CD8-positive, alpha-beta T cell (primary cell): ENCODE measurements at regions of chr7 and their contacts with region 1.

Region 1: GRCh38 chr7:55365675-55366460 is 731 bp downstream of the LANCL2 start:
- DNase-seq: peak; percentile 87 to 98 (median 93)
- ATAC-seq: peak; percentile 86
- H3K4me3 ChIP-seq: peak overlapping the region; percentile 92 to 96
- H3K4me3 Mint-ChIP-seq: peak overlapping the region; percentile 96
- H3K27ac ChIP-seq: peak overlapping the region; percentile 96 to 97
- H3K27ac Mint-ChIP-seq: peak overlapping the region; percentile 99
- H3K4me1 ChIP-seq: peaks cover 27% of the 10 kb centered on the region
- H3K4me1 Mint-ChIP-seq: peaks cover 35% of the 10 kb centered on the region
- H3K27me3 ChIP-seq: no peaks in the 10 kb centered on the region
- H3K27me3 Mint-ChIP-seq: no peaks in the 10 kb centered on the region
- CTCF ChIP-seq: no peak

Region 2: DNA sequence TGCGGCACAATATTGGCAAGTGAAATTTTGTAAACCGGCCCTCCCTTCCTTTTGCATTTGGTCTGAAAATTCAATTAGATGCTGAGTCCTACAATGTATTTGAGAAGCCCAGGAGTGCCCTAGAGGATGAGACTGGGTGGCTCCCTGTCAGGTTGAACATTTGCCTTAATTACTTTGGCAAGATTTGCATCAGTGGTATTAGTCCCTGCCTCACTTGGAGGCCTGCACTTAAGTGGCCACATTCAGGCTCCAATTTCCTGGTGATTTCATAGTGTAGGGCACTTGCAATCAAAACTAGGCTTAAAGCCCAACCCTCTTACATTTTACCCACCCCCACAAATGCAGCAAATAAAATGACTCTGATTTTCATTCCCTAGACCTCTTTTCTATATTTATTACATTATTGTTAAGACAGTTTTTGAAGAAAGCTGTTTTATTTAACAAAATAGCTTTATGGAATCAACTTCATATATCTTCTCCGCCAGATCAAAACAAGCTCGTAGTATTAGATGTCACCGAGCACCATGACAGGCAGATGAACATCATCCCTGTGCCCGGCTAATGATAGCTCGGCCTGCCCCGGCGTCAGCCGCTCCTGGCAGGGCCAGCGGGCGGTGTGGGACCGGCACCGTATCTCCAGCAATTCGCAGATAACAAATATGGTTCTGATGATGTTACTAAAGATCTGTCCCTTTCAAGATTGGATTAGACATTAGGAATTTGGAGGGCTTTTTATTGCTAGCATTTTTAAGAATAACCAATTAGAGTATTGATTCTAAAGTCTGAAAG is 273.5 kb before region 1 on chr7:
- CTCF ChIA-PET with region 1: no interaction called
- POLR2A ChIA-PET with region 1: no interaction called
- intact Hi-C with region 1: no loop called
- DNase-seq: no peak
- ATAC-seq: no peak
- H3K4me3 ChIP-seq: no peak overlapping the region
- H3K4me3 Mint-ChIP-seq: no peak overlapping the region
- H3K27ac ChIP-seq: no peak overlapping the region
- H3K27ac Mint-ChIP-seq: no peak overlapping the region
- H3K4me1 ChIP-seq: no peaks in the 10 kb centered on the region
- H3K4me1 Mint-ChIP-seq: peaks cover 2% of the 10 kb centered on the region
- H3K27me3 ChIP-seq: peaks cover 0 to 4% of the 10 kb centered on the region in 2 experiments
- H3K27me3 Mint-ChIP-seq: peaks cover 8% of the 10 kb centered on the region
- CTCF ChIP-seq: no peak

Region 3: DNA sequence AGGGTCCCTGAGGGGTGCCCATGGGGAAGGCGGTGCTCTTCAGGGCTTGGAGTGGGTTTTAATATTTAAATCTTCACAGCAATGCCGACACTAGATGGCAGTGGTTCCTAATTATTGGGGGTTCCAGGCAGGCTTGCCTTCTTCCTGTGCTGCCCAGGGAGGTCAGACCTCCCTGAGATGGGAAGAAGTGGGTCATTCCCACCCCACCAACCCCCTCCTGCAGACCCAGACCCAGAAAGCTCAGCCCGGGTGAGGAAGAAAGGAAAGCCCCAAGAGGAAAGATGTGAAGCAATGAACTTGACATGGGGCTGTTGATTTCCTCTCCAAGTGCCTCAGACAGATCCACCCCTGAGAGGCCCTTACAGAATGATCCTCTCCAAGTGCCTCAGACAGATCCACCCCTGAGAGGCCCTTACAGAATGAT is 85.8 kb before region 1 on chr7:
- CTCF ChIA-PET with region 1: interaction called, 6 read pairs
- POLR2A ChIA-PET with region 1: no interaction called
- intact Hi-C with region 1: loop called in 1 of 2 experiments (anchors 1 kb)
- DNase-seq: peak; percentile 26 to 82 (median 62)
- ATAC-seq: peak; percentile 74
- H3K4me3 ChIP-seq: no peak overlapping the region
- H3K4me3 Mint-ChIP-seq: no peak overlapping the region
- H3K27ac ChIP-seq: no peak overlapping the region
- H3K27ac Mint-ChIP-seq: no peak overlapping the region
- H3K4me1 ChIP-seq: no peaks in the 10 kb centered on the region
- H3K4me1 Mint-ChIP-seq: peaks cover 2% of the 10 kb centered on the region
- H3K27me3 ChIP-seq: no peaks in the 10 kb centered on the region
- H3K27me3 Mint-ChIP-seq: no peaks in the 10 kb centered on the region
- CTCF ChIP-seq: peak; percentile 75

Region 4: GRCh38 chr7:55409482-55410225 is 43.8 kb after region 1 on chr7:
- CTCF ChIA-PET with region 1: no interaction called
- POLR2A ChIA-PET with region 1: interaction called, 5 read pairs
- intact Hi-C with region 1: loop called in 1 of 2 experiments (anchors 5 kb)
- DNase-seq: no peak
- ATAC-seq: no peak
- H3K4me3 ChIP-seq: no peak overlapping the region
- H3K4me3 Mint-ChIP-seq: no peak overlapping the region
- H3K27ac ChIP-seq: no peak overlapping the region
- H3K27ac Mint-ChIP-seq: no peak overlapping the region
- H3K4me1 ChIP-seq: no peaks in the 10 kb centered on the region
- H3K4me1 Mint-ChIP-seq: no peaks in the 10 kb centered on the region
- H3K27me3 ChIP-seq: no peaks in the 10 kb centered on the region
- H3K27me3 Mint-ChIP-seq: no peaks in the 10 kb centered on the region
- CTCF ChIP-seq: no peak

Region 5: DNA sequence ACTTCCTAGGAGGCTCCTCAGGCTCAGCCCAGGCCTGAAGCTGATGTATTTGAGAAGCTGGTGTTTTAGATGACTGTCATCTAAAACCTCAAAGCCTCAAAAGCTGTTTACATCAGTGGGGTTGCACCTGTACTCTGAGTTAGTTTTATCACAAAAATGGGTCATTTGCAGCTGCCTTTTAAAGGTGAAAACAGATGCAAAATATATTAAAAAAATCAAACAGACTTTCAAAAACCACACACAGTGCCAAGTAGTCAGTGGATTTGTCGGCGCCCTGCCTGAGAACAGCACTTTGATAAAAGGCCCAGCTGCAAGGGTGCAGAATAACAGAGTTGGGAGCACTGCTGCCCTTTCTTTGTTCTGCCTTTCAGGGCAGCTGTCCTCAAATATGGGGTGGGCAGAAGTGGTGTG is 103.4 kb after region 1 on chr7:
- CTCF ChIA-PET with region 1: interaction called, 4 read pairs
- POLR2A ChIA-PET with region 1: interaction called, 19 read pairs
- intact Hi-C with region 1: loop called in 1 of 2 experiments (anchors 5 kb)
- DNase-seq: peak in 8 of 9 experiments; percentile 19 to 74 (median 54)
- ATAC-seq: peak; percentile 72
- H3K4me3 ChIP-seq: peak overlapping the region in 1 of 2 experiments; percentile 4
- H3K4me3 Mint-ChIP-seq: peak overlapping the region; percentile 54
- H3K27ac ChIP-seq: peak overlapping the region; percentile 31 to 62
- H3K27ac Mint-ChIP-seq: peak overlapping the region; percentile 96
- H3K4me1 ChIP-seq: peaks cover 63% of the 10 kb centered on the region
- H3K4me1 Mint-ChIP-seq: peaks cover 67% of the 10 kb centered on the region
- H3K27me3 ChIP-seq: no peaks in the 10 kb centered on the region
- H3K27me3 Mint-ChIP-seq: no peaks in the 10 kb centered on the region
- CTCF ChIP-seq: no peak

Region 6: GRCh38 chr7:55565681-55566080 is 199.8 kb after region 1 on chr7:
- CTCF ChIA-PET with region 1: no interaction called
- POLR2A ChIA-PET with region 1: no interaction called
- intact Hi-C with region 1: no loop called
- DNase-seq: peak in 2 of 9 experiments; percentile 10 to 42
- ATAC-seq: no peak
- H3K4me3 ChIP-seq: no peak overlapping the region
- H3K4me3 Mint-ChIP-seq: peak overlapping the region; percentile 55
- H3K27ac ChIP-seq: no peak overlapping the region
- H3K27ac Mint-ChIP-seq: peak overlapping the region; percentile 74
- H3K4me1 ChIP-seq: peaks cover 50% of the 10 kb centered on the region
- H3K4me1 Mint-ChIP-seq: peaks cover 89% of the 10 kb centered on the region
- H3K27me3 ChIP-seq: peaks cover 0 to 2% of the 10 kb centered on the region in 2 experiments
- H3K27me3 Mint-ChIP-seq: no peaks in the 10 kb centered on the region
- CTCF ChIP-seq: no peak

Region 7: DNA sequence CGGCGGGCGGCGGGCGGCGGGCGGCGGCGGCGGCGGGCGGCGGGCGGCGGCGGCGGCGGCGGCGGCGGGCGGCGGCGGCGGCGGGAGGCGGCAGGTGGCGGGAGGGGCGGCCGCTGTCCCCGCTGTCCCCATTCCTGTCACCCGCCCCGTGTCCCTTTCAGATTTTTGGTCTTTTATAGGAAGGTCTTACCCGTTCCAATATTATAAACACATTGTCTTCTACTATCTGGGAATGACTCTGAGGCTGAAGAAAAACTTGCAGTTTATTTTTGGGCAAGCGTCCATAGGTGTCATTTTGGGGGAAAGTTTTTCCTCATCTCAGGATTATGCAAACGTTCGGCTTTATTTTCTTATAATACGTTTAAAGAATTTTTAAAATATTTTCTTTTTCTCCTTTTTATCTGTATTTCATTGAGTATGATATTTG is 522.0 kb after region 1 on chr7:
- CTCF ChIA-PET with region 1: no interaction called
- POLR2A ChIA-PET with region 1: no interaction called
- intact Hi-C with region 1: loop called (anchors 1 kb)
- DNase-seq: peak in 2 of 9 experiments; percentile 5 to 38
- ATAC-seq: peak; percentile 15
- H3K4me3 ChIP-seq: peak overlapping the region in 1 of 2 experiments; percentile 58
- H3K4me3 Mint-ChIP-seq: peak overlapping the region; percentile 86
- H3K27ac ChIP-seq: no peak overlapping the region
- H3K27ac Mint-ChIP-seq: peak overlapping the region; percentile 87
- H3K4me1 ChIP-seq: no peaks in the 10 kb centered on the region
- H3K4me1 Mint-ChIP-seq: peaks cover 8% of the 10 kb centered on the region
- H3K27me3 ChIP-seq: no peaks in the 10 kb centered on the region
- H3K27me3 Mint-ChIP-seq: no peaks in the 10 kb centered on the region
- CTCF ChIP-seq: no peak

Region 8: GRCh38 chr7:56051339-56052191 is 685.7 kb after region 1 on chr7 and contains the starts of genes CCT6A and PSPH:
- CTCF ChIA-PET with region 1: no interaction called
- POLR2A ChIA-PET with region 1: interaction called, 3 read pairs
- intact Hi-C with region 1: loop called in 1 of 2 experiments (anchors 5 kb)
- DNase-seq: peak; percentile 64 to 95 (median 88)
- ATAC-seq: peak; percentile 86
- H3K4me3 ChIP-seq: peak within 1 kb of the TSS; percentile 72 to 81
- H3K4me3 Mint-ChIP-seq: peak within 1 kb of the TSS; percentile 92
- H3K27ac ChIP-seq: peak within 1 kb of the TSS; percentile 62 to 83
- H3K27ac Mint-ChIP-seq: peak within 1 kb of the TSS; percentile 95
- H3K4me1 ChIP-seq: peaks cover 29% of the 10 kb centered on the region
- H3K4me1 Mint-ChIP-seq: peaks cover 47% of the 10 kb centered on the region
- H3K27me3 ChIP-seq: no peaks in the 10 kb centered on the region
- H3K27me3 Mint-ChIP-seq: no peaks in the 10 kb centered on the region
- CTCF ChIP-seq: no peak
- total RNA-seq, gene CCT6A: 36.3 to 40.9 TPM
- total RNA-seq, gene PSPH: 0.89 to 1.1 TPM

Region 9: GRCh38 chr7:56106108-56107073 is 740.5 kb after region 1 on chr7 and contains the start of gene CHCHD2:
- CTCF ChIA-PET with region 1: no interaction called
- POLR2A ChIA-PET with region 1: interaction called, 16 read pairs
- intact Hi-C with region 1: loop called (anchors 1 to 2 kb)
- DNase-seq: peak; percentile 87 to 99 (median 91)
- ATAC-seq: peak; percentile 96
- H3K4me3 ChIP-seq: peak within 1 kb of the TSS; percentile 75 to 91
- H3K4me3 Mint-ChIP-seq: peak within 1 kb of the TSS; percentile 95
- H3K27ac ChIP-seq: peak within 1 kb of the TSS; percentile 90 to 95
- H3K27ac Mint-ChIP-seq: peak within 1 kb of the TSS; percentile 98
- H3K4me1 ChIP-seq: peaks cover 20% of the 10 kb centered on the region
- H3K4me1 Mint-ChIP-seq: peaks cover 33% of the 10 kb centered on the region
- H3K27me3 ChIP-seq: no peaks in the 10 kb centered on the region
- H3K27me3 Mint-ChIP-seq: peaks cover 2% of the 10 kb centered on the region
- CTCF ChIP-seq: no peak
- total RNA-seq, gene CHCHD2: 283 to 294 TPM